ENCODE measurements at regions of chr13 and their contacts with region 1.

Region 1: GRCh38 chr13:106536244-106537034 is 977 bp upstream of the EFNB2 start:
- DNase-seq: peak; percentile 73
- H3K4me3 ChIP-seq: peak overlapping the region; percentile 61 to 65 (median 63)
- H3K27ac ChIP-seq: peak overlapping the region; percentile 45
- H3K4me1 ChIP-seq: peaks cover 11% of the 10 kb centered on the region
- H3K27me3 ChIP-seq: no peaks in the 10 kb centered on the region
- CTCF ChIP-seq: peak; percentile 93 to 99

Region 2: GRCh38 chr13:104773775-104774174 is 1762.7 kb before region 1 on chr13:
- CTCF ChIA-PET with region 1: interaction called, 4 read pairs
- dilution Hi-C with region 1: no loop called
- in situ Hi-C with region 1: no loop called
- intact Hi-C with region 1: loop called (anchors 2 kb)
- DNase-seq: peak; percentile 32
- H3K4me3 ChIP-seq: no peak overlapping the region
- H3K27ac ChIP-seq: no peak overlapping the region
- H3K4me1 ChIP-seq: no peaks in the 10 kb centered on the region
- H3K27me3 ChIP-seq: no peaks in the 10 kb centered on the region
- CTCF ChIP-seq: peak; percentile 45 to 69

Region 3: DNA sequence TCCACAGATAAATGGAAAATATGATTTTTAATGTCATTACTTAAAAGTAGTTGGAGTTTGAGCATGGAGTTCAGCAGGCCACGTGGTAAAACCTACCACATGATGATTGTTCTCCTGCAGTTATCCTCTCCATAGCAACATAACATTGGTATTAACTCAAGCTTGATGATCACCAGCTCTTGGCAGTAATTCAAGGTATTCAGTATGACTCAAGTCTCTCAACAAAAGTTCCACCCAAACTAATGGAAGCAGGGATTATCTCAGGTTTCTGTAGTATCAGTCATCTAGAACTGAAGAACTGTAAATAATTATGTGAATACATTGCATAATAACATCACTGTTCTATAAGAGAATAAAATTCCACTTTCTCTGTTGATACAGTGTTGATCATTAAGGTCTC is 1093.5 kb before region 1 on chr13:
- CTCF ChIA-PET with region 1: no interaction called
- dilution Hi-C with region 1: no loop called
- in situ Hi-C with region 1: loop called in 1 of 2 experiments (anchors 25 kb)
- intact Hi-C with region 1: no loop called
- DNase-seq: peak; percentile 99
- H3K4me3 ChIP-seq: no peak overlapping the region
- H3K27ac ChIP-seq: peak overlapping the region; percentile 97
- H3K4me1 ChIP-seq: no peaks in the 10 kb centered on the region
- H3K27me3 ChIP-seq: no peaks in the 10 kb centered on the region
- CTCF ChIP-seq: no peak

Region 4: GRCh38 chr13:105817021-105817420 is 719.4 kb before region 1 on chr13:
- CTCF ChIA-PET with region 1: interaction called, 3 read pairs
- dilution Hi-C with region 1: no loop called
- in situ Hi-C with region 1: loop called in 1 of 2 experiments (anchors 10 kb)
- intact Hi-C with region 1: loop called (anchors 1 kb)
- DNase-seq: peak; percentile 15
- H3K4me3 ChIP-seq: no peak overlapping the region
- H3K27ac ChIP-seq: no peak overlapping the region
- H3K4me1 ChIP-seq: peaks cover 18% of the 10 kb centered on the region
- H3K27me3 ChIP-seq: no peaks in the 10 kb centered on the region
- CTCF ChIP-seq: no peak

Region 5: DNA sequence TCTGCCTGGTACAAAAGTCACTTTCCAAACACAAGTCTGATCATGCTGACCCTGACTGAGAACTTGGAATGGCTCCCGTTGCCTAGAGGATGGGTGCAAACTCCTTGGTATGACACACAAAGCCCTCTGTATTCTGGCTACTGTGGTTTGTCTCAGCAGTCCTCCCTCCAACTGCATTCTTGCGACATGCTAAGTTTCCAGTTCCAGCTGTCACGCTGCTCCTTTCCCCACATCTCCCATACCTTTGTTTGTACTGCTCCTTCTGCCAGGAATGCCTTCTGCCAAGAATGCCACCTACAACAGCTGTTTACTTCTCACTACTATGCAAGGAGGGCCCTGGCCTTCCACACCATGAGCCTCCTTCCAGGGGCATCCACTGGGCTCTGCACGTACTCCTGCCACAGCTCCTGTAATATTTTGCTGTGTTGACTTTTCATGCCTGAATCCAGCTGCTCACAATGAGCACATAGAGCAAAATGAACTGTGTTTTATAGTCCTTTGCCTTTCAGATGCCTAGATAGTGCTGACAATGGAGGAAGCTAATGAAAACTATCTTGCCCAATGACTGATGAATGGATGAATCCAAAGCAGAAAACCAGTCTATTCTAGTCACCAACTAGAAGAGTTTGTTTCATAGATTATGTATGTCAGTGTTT is 544.7 kb before region 1 on chr13:
- CTCF ChIA-PET with region 1: no interaction called
- dilution Hi-C with region 1: no loop called
- in situ Hi-C with region 1: no loop called
- intact Hi-C with region 1: loop called (anchors 1 kb)
- DNase-seq: peak; percentile 100
- H3K4me3 ChIP-seq: no peak overlapping the region
- H3K27ac ChIP-seq: peak overlapping the region; percentile 100
- H3K4me1 ChIP-seq: peaks cover 26% of the 10 kb centered on the region
- H3K27me3 ChIP-seq: no peaks in the 10 kb centered on the region
- CTCF ChIP-seq: peak in 1 of 2 donors; percentile 41

Region 6: DNA sequence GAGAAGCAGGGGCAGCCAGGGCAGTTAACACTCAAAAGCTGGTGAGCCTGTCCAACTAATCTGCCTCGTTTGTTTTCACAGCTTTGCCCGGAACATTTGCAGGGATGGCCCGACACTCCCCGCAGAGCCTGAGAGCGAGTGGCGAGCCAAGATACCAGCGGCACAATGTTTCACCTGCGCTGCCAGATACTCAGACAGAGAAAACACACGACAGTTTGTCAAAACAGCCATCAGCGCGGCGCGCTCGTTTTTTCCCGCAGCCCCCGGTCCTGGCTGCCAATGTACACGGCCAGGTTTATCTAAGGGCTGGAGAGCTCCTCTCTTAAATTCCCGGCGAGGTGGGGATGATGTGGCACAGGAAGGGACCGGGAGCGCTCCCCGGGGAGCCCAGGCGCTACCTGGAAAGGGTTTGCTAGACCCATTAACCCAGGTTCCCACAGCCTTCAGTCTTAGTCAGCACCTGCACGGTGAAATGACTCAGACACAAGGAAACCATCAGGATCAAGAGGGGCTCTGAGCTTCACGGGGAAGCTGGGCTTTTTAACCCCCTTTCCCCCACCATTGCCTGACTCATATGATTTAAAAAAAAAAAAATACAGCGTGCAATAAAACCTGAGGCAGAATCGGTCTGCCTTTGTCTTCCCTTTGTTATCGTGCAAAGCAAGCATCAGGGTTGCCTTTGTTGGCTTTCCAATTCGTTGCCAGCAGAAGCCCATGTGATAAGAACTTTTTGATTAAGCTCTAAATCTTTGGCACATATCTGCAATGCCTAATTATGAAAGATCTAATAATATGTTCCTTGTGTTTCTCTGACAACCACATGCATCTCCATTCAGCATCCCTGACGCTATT is 187.1 kb before region 1 on chr13:
- CTCF ChIA-PET with region 1: no interaction called
- dilution Hi-C with region 1: no loop called
- in situ Hi-C with region 1: no loop called
- intact Hi-C with region 1: loop called (anchors 5 kb)
- DNase-seq: peak; percentile 90
- H3K4me3 ChIP-seq: peak overlapping the region; percentile 19 to 48 (median 42)
- H3K27ac ChIP-seq: peak overlapping the region; percentile 8
- H3K4me1 ChIP-seq: peaks cover 15% of the 10 kb centered on the region
- H3K27me3 ChIP-seq: no peaks in the 10 kb centered on the region
- CTCF ChIP-seq: no peak